Activated CD4-positive, alpha-beta memory T cell treated with anti-CD3 and anti-CD28 coated beads for 36 hours (primary cell): ENCODE measurements at regions of chr7 and their contacts with region 1.

Region 1: GRCh38 chr7:112880818-112881418 is 90.7 kb upstream of the TMEM168 start:
- DNase-seq: no peak
- H3K4me3 Mint-ChIP-seq: no peak overlapping the region
- H3K27ac Mint-ChIP-seq: no peak overlapping the region
- H3K4me1 Mint-ChIP-seq: peaks cover 3% of the 10 kb centered on the region
- H3K27me3 Mint-ChIP-seq: no peaks in the 10 kb centered on the region

Region 2: GRCh38 chr7:112743811-112744210 is 137.1 kb before region 1 on chr7:
- CTCF ChIA-PET with region 1: no interaction called
- POLR2A ChIA-PET with region 1: no interaction called
- intact Hi-C with region 1: no loop called
- DNase-seq: no peak
- H3K4me3 Mint-ChIP-seq: no peak overlapping the region
- H3K27ac Mint-ChIP-seq: no peak overlapping the region
- H3K4me1 Mint-ChIP-seq: no peaks in the 10 kb centered on the region
- H3K27me3 Mint-ChIP-seq: peaks cover 7% of the 10 kb centered on the region

Region 3: GRCh38 chr7:112869111-112869757 is 11.7 kb before region 1 on chr7:
- CTCF ChIA-PET with region 1: interaction called, 22 read pairs
- POLR2A ChIA-PET with region 1: no interaction called
- intact Hi-C with region 1: no loop called
- DNase-seq: peak; percentile 69
- H3K4me3 Mint-ChIP-seq: no peak overlapping the region
- H3K27ac Mint-ChIP-seq: no peak overlapping the region
- H3K4me1 Mint-ChIP-seq: peaks cover 14% of the 10 kb centered on the region
- H3K27me3 Mint-ChIP-seq: no peaks in the 10 kb centered on the region

Region 4: GRCh38 chr7:112959276-112959675 is 78.4 kb after region 1 on chr7:
- CTCF ChIA-PET with region 1: no interaction called
- POLR2A ChIA-PET with region 1: no interaction called
- intact Hi-C with region 1: no loop called
- DNase-seq: no peak
- H3K4me3 Mint-ChIP-seq: no peak overlapping the region
- H3K27ac Mint-ChIP-seq: no peak overlapping the region
- H3K4me1 Mint-ChIP-seq: no peaks in the 10 kb centered on the region
- H3K27me3 Mint-ChIP-seq: peaks cover 37% of the 10 kb centered on the region

Region 5: DNA sequence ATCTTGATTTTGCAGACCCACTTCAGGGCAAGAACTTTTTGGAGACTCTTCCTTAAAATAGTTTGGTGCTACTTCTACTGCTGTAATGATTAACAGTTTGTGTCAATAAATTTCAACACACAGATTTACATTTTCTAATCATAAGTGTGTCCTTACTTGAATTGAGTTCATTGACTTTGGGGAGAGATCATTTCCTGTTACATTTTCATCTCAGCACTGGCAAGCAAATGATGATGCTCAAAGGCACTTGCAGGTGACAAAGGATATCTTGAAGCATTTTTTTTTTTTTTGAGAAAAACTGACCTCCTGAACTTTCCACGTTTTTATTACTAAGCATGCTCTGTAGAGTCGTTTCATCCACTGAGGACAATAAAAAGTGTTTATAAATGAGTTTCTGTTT is 153.0 kb after region 1 on chr7:
- CTCF ChIA-PET with region 1: no interaction called
- POLR2A ChIA-PET with region 1: no interaction called
- intact Hi-C with region 1: no loop called
- DNase-seq: no peak
- H3K4me3 Mint-ChIP-seq: no peak overlapping the region
- H3K27ac Mint-ChIP-seq: no peak overlapping the region
- H3K4me1 Mint-ChIP-seq: no peaks in the 10 kb centered on the region
- H3K27me3 Mint-ChIP-seq: peaks cover 15% of the 10 kb centered on the region

Region 6: GRCh38 chr7:113071465-113071864 is 190.5 kb after region 1 on chr7:
- CTCF ChIA-PET with region 1: no interaction called
- POLR2A ChIA-PET with region 1: no interaction called
- intact Hi-C with region 1: no loop called
- DNase-seq: no peak
- H3K4me3 Mint-ChIP-seq: no peak overlapping the region
- H3K27ac Mint-ChIP-seq: no peak overlapping the region
- H3K4me1 Mint-ChIP-seq: no peaks in the 10 kb centered on the region
- H3K27me3 Mint-ChIP-seq: peaks cover 4% of the 10 kb centered on the region